SK-N-SH (cell line): ENCODE measurements at regions of chr1 and their contacts with region 1.

Region 1: GRCh38 chr1:95072532-95073419 is at the start of gene ALG14:
- DNase-seq: peak; percentile 86
- H3K4me3 ChIP-seq: peak within 1 kb of the TSS; percentile 76 to 81
- H3K27ac ChIP-seq: peak within 1 kb of the TSS; percentile 83 to 98
- H3K4me1 ChIP-seq: peaks cover 0 to 5% of the 10 kb centered on the region in 2 experiments; a peak in 2 of 4 replicates
- H3K27me3 ChIP-seq: no peaks in the 10 kb centered on the region
- CTCF ChIP-seq: no peak
- EP300 ChIP-seq: 0 out of 4 replicates have a peak, but pooled peaks of 1 of the 2 experiments have one; percentile 10
- RAD21 ChIP-seq: no peak; the same call in 1 of the 2 replicates
- polyA plus RNA-seq, gene ALG14: 2.5 and 2.6 TPM in 2 replicates

Region 2: GRCh38 chr1:95084317-95085176 is 11.8 kb after region 1 on chr1:
- CTCF ChIA-PET with region 1: interaction called, 11 read pairs
- POLR2A ChIA-PET with region 1: no interaction called
- DNase-seq: peak; percentile 61
- H3K4me3 ChIP-seq: no peak overlapping the region
- H3K27ac ChIP-seq: no peak overlapping the region
- H3K4me1 ChIP-seq: peaks cover 5% of the 10 kb centered on the region in 2 experiments; a peak in 2 of 4 replicates
- H3K27me3 ChIP-seq: no peaks in the 10 kb centered on the region; the same call in 1 of the 2 replicates
- CTCF ChIP-seq: peak; percentile 68
- EP300 ChIP-seq: no peak
- RAD21 ChIP-seq: peak; percentile 53